ENCODE measurements at regions of chr6 and their contacts with region 1.

Region 1: DNA sequence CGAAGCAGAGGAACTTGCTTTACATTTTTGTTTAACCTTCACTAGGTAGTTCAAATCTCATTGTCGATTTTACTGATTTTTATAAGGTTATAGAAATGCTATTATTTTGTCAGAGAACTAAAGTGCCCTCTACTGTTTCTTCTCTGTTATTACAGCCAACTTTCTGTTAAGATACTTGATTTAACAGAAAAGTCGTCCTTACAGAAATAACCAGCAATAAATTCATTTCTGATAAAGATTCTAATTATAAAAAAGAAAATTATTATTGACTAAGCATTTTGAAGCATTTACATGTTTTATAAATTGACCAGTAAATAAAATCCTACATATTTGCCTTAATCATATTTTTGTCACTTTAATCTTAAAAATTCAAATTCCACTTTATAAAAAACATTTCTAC is 60.8 kb downstream of the OGFRL1 start:
- DNase-seq: no peak

Region 2: DNA sequence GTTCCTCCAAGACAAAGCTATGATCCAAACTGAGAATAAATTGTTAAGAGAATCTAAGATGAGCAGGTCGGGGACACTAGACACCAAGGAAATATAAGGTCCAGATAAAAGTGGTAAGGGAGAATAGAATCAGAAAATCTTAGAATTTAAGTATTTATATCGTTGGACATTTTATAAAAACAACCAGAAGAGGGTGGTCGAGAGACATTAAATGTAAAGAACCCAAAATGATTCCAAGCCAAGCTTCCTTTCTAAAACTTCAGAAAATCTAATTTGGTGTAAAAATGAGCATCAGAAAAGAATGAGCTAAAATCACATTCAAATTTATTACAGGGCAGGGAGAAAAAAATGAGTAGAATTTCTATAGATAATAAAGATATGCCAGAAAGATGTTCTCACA is 158.6 kb before region 1 on chr6:
- intact Hi-C with region 1: loop called in 1 of 2 experiments (anchors 5 kb)
- DNase-seq: no peak

Region 3: DNA sequence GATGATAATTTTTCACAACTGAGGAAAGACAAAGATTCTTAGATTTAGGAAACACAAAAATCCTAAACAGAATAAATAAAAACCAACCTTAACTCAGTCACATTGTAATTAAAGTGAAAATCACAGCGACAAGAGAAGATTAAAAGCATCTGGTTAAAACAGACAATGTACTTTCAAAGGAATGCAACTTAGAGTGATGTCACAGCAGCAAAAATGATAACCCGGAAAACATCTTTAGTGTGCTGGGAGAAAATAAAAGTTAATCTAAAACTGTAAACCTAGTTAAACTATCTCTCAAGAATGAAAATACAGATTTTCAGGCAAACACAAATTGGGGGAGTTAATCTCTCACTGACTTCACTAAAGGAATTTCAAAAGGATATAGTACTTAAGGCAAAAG is 137.6 kb before region 1 on chr6:
- intact Hi-C with region 1: no loop called
- DNase-seq: no peak

Region 4: GRCh38 chr6:71294121-71294523 is 55.3 kb before region 1 on chr6:
- intact Hi-C with region 1: loop called in 1 of 2 experiments (anchors 10 kb)
- DNase-seq: no peak

Measured in posterior vena cava (tissue), 2 donors.